ENCODE measurements at regions of chr20 and their contacts with region 1.

Region 1: GRCh38 chr20:38805502-38805957 is at the start of gene PPP1R16B:
- DNase-seq: peak; percentile 58
- H3K4me3 ChIP-seq: peak within 1 kb of the TSS; percentile 72
- H3K27ac ChIP-seq: peak within 1 kb of the TSS; percentile 91
- H3K4me1 ChIP-seq: peaks cover 60% of the 10 kb centered on the region
- H3K27me3 ChIP-seq: peaks cover 47% of the 10 kb centered on the region
- CTCF ChIP-seq: no peak
- total RNA-seq, gene PPP1R16B: 6.3 TPM

Region 2: DNA sequence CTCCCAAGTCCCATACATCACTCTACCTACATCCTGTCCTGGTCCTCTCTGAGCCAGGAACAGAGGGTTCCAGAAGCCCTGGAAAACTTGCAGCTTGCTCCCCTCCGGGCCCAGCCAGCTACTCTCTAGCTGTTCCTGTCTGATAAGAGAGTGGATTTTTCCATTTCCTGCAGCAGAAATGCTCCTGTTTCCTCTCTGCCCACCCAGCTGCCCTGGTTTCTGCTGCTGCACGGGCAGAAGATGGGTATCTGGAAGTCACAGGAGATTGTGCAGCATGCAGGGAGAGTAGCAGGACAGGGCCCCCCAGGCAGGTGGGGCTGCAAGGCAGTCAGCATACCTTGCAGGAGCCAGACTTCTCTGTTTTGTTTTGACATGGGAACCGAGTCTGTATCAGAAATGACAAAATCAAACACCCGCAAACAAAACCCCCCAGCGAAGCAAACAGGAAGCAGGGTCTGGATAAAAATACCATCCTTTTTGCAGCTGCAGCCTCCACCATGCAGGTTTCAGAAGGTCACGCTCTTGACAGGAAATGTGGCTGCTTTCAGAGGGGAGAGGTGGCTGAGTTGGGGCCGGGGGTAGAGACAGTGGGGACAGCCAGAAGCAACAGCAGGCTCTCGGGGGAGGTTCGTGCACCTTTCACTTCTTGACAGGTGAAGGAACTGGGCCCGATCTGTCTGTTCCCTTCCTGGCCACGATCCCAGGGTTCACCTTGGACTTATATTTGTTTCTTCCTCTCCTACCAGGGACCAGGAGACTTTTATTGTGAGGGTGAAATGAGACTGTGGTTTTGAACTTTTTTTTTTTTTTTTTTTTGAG is 69.9 kb after region 1 on chr20:
- intact Hi-C with region 1: loop called (anchors 10 kb)
- DNase-seq: no peak
- H3K4me3 ChIP-seq: peak overlapping the region; percentile 11
- H3K27ac ChIP-seq: peak overlapping the region; percentile 77
- H3K4me1 ChIP-seq: peaks cover 48% of the 10 kb centered on the region
- H3K27me3 ChIP-seq: peaks cover 62% of the 10 kb centered on the region
- CTCF ChIP-seq: no peak

Measured in left ventricle myocardium inferior (tissue), 1 donor.